Cardiac septum (tissue), 1 donor: ENCODE measurements at regions of chr7 and their contacts with region 1.

Region 1: GRCh38 chr7:139658908-139659675 is 118.7 kb downstream of the HIPK2 start:
- DNase-seq: no peak

Region 2: DNA sequence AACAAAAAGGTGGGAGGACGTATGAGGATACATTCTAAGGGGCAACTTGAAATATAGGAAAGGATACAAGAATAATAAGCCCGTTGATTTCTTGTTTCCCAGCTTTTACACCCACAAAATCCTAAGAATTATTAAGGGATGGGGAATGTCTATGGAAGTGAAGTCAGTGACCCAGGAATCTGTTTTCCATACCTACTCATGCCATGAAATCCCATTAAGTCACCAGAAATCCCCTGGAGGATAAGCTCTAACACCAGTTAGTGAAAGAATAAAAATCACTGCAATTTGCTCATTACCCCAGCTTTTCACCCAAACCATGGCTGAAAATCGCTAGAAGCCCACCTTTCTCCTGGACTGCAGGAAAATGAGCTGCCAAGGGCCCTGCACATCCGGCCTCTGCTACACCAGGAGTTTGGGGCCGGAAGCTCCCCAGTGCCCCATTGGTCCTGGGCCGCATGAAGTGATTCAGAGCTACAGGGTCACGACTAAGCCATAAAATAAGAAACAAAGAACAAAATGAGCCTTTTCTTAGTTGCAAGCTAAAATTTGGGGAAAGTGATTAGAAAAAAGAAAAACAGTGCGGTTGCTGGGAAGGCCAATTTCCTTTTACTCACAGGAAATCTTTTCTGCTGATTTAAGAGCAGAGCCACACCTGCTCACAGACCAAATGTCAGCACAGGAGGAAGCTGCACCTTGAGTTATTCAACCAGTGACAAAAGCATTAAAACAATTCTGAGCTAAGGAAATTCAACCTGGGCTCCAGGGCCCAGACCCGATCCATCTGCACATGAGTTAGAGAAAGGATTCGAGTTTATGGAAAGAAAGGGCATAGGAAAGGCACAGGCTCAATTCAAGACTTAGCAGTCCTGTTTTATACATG is 78.4 kb after region 1 on chr7:
- intact Hi-C with region 1: loop called (anchors 5 kb)
- DNase-seq: no peak